Activated CD4-positive, alpha-beta T cell treated with anti-CD3 and anti-CD28 coated beads, Interleukin-2, amount 10 ng/mL, durations not matched to agents 7 days and 5 days (primary cell): ENCODE measurements at regions of chr22 and their contacts with region 1.

Region 1: DNA sequence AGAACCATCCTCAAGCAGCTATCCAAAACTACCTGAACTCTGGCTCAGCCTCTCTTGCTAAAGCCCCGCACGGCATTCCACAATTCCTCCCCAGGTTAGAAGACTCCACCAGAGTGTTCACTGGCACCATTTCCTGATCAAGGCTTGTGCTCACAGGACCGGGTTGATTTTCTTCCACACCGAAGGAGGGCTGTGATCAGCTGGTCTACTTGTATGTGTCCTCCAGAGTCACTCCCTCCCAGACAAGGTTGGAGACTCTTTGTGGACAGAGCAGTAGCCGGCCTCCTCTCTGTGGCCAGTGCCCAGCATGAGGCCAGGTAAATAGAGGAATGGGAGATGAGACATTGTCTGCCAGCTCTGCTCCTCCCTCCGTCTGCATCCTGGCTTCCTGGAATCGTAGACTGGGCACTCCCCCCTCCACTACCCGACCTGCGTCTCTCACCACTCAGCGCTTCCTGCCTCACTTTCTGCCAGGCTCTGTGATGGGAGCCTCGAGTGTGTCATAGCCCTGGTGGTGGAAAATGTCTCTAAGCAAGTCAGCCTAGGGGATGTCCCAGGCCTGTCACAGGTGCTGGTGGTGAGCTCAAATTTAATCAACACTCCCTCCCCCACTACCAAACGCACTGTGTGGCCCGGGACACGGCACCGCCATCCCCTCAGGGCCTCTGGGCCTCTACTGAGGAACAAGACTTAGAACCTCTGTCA is 12.5 kb upstream of the TMPRSS6 start:
- DNase-seq: peak; percentile 96
- H3K4me3 Mint-ChIP-seq: peak overlapping the region; percentile 65
- H3K27ac Mint-ChIP-seq: peak overlapping the region; percentile 98
- H3K4me1 Mint-ChIP-seq: peaks cover 85% of the 10 kb centered on the region
- H3K27me3 Mint-ChIP-seq: no peaks in the 10 kb centered on the region

Region 2: DNA sequence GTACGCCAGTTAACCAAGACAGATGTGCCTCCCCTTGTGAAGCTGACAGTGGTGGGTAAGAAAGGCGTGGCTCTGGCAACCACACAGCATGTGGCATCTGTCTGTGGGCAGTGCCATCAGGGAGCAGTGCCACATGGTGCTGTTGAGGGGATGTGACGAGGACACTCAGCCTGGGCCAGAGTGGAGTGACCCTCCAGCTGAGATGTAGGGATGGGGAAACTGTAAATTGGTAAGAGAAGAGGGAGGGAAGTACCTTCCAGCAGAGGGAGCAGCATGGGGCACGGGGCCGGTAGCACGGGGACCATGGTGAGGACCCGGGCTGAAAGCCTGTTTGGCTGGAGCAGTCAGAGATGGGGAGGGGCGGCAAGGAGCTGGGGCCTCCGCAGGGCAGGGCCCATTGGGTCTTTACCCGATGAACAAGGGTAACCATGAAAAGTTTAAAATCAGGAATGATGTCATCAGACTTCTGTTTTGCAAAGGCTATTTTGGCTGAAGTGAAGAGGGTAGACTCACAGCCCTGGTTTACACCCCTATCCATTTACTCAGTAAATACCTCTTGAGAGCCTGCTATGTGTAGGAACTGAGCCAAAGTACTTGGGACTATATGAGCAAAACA is 23.0 kb before region 1 on chr22:
- CTCF ChIA-PET with region 1: interaction called, 25 read pairs
- POLR2A ChIA-PET with region 1: no interaction called
- DNase-seq: no peak
- H3K4me3 Mint-ChIP-seq: no peak overlapping the region
- H3K27ac Mint-ChIP-seq: no peak overlapping the region
- H3K4me1 Mint-ChIP-seq: peaks cover 24% of the 10 kb centered on the region
- H3K27me3 Mint-ChIP-seq: peaks cover 5% of the 10 kb centered on the region

Region 3: DNA sequence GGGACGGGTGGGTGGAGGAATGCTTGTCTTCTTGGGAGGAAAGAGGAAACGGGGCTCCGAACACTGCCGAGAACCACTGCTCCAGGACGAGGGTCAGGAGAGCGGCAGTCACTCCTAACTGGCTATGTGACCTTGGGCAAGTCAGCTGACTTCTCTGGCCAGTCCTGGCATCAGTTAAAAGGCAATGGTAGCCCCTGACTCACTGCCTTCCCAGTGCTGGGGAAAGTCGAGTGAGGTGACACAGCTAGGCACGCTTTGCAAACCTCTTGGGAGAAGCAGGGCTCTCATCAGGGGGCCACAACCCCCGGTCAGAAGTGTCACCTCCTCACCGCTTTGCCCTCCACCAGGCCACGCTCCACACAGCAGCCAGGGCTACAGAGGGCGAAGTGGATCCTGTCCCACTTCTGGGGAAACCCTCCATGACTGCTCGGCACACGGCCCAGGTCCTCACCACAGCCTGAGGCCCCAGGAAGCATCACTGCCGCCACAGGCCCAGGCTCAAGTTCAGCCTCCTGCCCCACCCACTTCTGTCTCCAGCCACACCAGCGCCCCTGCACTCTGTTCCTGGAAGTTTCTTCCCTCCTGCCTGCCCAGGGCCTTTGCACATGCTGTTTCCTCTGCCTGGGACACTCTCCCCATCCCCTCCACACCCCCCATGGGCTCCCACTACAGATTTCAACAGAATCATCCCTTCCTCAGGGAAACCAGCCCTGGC is 11.4 kb after region 1 on chr22:
- CTCF ChIA-PET with region 1: interaction called, 15 read pairs
- POLR2A ChIA-PET with region 1: no interaction called
- DNase-seq: no peak
- H3K4me3 Mint-ChIP-seq: no peak overlapping the region
- H3K27ac Mint-ChIP-seq: peak overlapping the region; percentile 62
- H3K4me1 Mint-ChIP-seq: peaks cover 37% of the 10 kb centered on the region
- H3K27me3 Mint-ChIP-seq: no peaks in the 10 kb centered on the region

Region 4: DNA sequence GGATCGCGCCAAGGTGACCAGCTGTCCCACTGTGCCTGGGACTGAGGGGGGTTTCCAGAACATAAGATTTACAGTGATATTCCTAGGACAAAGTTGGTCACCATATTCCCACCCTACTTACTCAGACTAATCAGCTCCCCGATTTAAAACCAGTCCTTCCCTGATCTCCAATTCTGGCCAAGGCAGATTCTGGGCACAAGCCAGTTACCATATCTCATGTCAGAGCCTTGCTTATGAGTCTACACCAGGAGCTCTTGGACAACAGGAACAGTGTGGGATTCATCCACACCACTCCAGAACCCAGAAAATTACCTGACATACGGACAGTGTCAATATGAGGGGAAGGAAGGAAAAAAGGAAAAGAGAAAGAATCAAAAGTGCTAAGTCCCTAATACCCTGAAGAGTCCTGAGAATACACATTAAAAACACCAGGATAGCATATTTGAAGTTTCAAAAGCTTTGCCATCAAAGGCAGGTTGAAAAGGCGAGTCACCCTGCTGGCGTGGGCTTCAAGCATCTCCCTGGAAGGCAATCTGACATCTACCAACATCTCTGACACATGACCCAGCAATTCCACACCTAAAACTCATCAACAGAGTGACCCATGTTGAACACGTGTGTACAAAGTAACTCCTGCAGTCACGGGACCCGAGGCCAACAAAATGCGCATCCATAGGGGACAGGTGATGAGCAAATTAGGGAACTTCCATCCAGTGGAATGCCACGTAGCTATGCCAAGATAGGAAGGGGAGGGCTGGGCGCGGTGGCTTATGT is 35.7 kb after region 1 on chr22:
- CTCF ChIA-PET with region 1: interaction called, 12 read pairs
- POLR2A ChIA-PET with region 1: interaction called, 5 read pairs
- DNase-seq: no peak
- H3K4me3 Mint-ChIP-seq: no peak overlapping the region
- H3K27ac Mint-ChIP-seq: no peak overlapping the region
- H3K4me1 Mint-ChIP-seq: peaks cover 61% of the 10 kb centered on the region
- H3K27me3 Mint-ChIP-seq: no peaks in the 10 kb centered on the region